Activated CD4-positive, alpha-beta T cell treated with anti-CD3 and anti-CD28 coated beads for 36 hours (primary cell): ENCODE measurements at regions of chr1 and their contacts with region 1.

Region 1: DNA sequence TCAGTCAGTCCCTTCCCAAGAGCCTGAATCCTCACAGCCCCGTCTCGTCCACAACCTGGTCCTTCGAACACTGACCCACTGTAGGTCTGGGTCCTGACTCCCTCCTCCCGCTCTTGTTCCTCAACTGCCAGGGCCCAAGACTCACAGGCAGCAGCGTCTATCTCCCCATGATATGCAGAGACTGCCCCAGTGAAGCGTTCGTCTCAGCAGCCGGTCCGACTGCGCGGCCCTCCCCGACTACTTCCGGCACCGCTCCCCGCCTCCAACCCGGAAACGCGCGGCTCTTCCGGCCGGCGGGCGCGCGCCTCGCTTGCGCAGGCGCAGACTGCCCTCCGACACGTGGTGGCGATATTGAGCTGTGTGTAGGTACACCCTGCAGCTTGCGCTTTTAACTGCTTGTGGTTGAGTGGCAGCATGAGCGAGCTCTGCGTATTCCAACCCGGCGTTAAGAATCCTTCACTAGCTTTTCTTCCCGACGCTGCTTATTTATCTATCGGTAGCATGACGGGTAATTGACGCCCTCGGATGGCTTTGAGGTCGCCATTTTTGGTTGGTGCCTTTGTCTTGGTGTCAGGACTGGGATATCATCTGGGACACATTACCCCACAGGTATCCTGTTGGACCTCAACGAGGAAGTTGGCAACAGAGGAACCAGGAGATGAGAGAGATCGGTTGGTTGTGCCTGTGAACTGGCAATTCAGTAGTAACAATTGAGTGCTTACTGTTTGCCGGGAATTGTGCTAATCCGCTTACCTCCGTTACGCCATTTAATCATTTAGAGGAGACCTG is at the start of gene TAF12:
- DNase-seq: peak; percentile 95
- ATAC-seq: peak; percentile 81
- H3K4me3 Mint-ChIP-seq: peak within 1 kb of the TSS; percentile 98
- H3K27ac Mint-ChIP-seq: peak within 1 kb of the TSS; percentile 97
- H3K4me1 Mint-ChIP-seq: peaks cover 50% of the 10 kb centered on the region
- H3K27me3 Mint-ChIP-seq: no peaks in the 10 kb centered on the region
- total RNA-seq, gene TAF12: 23.8 to 32.5 TPM

Region 2: DNA sequence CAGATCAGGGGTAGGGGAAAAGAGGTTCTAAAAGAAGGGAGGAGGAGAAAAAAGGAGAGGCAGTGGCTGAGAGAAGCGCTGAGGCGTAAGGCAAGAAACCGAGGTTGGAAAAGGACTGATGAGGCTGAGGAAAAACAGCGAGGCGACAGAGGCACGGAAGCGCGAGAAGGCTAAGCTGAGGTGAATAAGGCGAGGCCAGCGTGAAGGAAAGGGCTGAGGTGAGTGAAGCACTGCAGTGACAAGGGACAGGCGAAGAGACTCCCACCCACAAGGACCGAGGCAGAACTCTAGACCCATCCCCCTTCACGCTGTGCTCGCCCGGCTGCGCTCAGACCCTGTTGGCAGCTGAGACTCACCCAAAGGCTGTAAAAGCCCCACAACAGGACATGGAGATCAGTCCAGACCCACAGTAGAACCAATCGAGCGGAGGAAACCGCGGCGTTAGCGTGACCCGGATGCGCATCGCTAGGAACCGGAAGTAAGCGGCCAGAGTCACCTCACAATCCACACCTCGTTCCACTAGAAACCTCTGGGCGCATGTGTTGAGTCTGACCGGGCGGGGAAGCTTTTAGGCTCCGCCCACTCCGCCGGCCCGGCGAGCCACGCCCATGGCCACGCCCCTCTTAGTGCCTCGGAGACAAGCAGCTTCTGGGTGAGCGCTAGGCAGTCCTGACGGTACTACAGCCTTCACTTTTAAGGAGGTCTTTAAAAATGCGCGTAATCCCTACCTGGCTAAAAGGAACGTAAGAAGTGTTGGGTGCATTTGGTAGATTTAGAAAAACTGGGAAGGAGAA is 554.7 kb before region 1 on chr1 and contains the start of gene EYA3:
- CTCF ChIA-PET with region 1: no interaction called
- POLR2A ChIA-PET with region 1: no interaction called
- intact Hi-C with region 1: loop called in 1 of 2 experiments (anchors 10 kb)
- DNase-seq: peak; percentile 99
- ATAC-seq: peak; percentile 93
- H3K4me3 Mint-ChIP-seq: peak within 1 kb of the TSS; percentile 98
- H3K27ac Mint-ChIP-seq: peak within 1 kb of the TSS; percentile 98
- H3K4me1 Mint-ChIP-seq: peaks cover 27% of the 10 kb centered on the region
- H3K27me3 Mint-ChIP-seq: no peaks in the 10 kb centered on the region
- total RNA-seq, gene EYA3: 30.1 to 37.1 TPM

Region 3: DNA sequence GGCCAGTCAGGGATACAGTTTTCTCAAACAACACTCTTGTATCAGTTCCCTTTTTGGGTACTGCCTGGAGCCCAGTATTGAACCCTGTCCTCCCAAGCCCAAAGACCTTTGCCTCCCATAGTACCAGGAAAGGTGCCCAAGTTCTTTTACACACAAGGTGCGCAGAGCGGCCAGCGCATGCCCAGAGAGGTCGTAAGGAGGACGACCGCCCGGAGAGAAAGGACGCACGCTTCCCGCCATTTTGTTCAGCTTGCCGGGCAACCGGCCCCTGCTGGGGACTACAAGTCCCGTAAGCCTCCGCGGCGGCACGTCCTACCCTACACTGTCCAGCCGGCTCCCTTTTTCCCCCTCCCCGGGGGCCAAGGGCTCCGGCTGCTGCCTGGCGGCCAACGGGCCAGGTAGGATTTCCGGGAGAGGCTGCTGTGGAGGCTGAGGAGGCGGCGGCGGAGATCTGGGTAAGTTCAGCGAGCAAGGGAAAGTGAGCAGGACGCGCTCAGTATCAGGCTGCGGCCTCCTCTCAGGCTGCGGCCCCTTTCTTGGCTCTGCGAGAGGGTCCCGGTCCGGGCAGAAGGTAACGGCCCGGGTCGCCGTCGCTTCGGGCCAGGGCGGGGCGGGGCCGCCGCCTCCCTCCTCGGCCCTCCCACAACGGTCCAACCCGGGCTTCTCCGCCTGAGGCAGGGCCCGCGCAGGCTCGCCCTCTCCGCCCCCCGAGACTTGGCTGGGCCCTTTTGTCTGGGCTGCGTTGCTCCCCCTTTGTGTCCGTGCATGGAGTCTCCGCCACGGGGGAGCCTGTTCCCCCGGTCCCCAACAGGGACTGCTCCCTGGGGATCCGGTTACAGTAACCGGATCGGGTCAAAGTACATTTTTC is 273.4 kb before region 1 on chr1 and contains the start of gene PHACTR4:
- CTCF ChIA-PET with region 1: no interaction called
- POLR2A ChIA-PET with region 1: interaction called, 4 read pairs
- intact Hi-C with region 1: loop called in 1 of 2 experiments (anchors 2 kb)
- DNase-seq: peak; percentile 90
- ATAC-seq: peak; percentile 93
- H3K4me3 Mint-ChIP-seq: peak within 1 kb of the TSS; percentile 92
- H3K27ac Mint-ChIP-seq: peak within 1 kb of the TSS; percentile 92
- H3K4me1 Mint-ChIP-seq: peaks cover 25% of the 10 kb centered on the region
- H3K27me3 Mint-ChIP-seq: no peaks in the 10 kb centered on the region
- total RNA-seq, gene PHACTR4: 23.0 to 30.1 TPM

Region 4: DNA sequence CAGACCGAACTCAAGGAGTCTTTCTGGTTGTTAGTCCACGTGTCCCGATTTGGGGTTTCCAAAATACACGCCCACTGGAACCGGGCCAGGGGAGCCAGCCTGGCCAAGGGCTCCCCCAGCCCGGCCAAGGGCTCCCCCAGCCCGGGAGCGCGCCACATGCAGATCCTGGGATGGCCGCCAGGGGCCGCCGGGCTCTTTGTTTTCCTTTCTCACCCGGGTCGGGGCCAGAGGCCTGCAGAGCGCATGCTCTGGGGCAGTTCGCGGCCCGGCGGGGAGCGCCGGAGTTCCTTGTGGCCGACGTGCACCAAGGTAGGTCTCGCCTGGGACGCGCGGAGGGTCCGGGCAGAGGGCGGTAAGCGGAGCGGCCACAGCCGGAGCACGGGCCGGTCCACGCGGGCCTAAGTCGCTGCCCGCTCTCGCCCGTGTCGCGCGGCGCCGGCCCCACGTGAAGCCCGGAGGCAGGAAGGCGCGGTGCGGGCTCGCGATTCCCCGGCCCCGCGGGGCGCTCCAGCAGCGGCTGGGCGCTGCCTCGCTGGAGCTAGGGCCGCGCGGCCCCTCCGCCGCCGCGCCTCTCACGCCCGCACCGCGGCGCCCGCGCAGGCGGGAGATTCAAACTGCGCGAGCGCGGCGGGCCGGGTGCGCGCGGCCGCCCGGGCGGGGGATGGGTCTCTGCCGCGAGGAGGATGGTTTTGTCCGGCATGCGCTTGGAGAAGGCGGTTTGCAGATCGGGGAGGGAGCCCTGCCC is 124.9 kb before region 1 on chr1:
- CTCF ChIA-PET with region 1: no interaction called
- POLR2A ChIA-PET with region 1: interaction called, 22 read pairs
- intact Hi-C with region 1: loop called (anchors 1 to 2 kb)
- DNase-seq: peak; percentile 95
- ATAC-seq: peak; percentile 66
- H3K4me3 Mint-ChIP-seq: peak overlapping the region; percentile 77
- H3K27ac Mint-ChIP-seq: peak overlapping the region; percentile 83
- H3K4me1 Mint-ChIP-seq: peaks cover 34% of the 10 kb centered on the region
- H3K27me3 Mint-ChIP-seq: no peaks in the 10 kb centered on the region

Region 5: DNA sequence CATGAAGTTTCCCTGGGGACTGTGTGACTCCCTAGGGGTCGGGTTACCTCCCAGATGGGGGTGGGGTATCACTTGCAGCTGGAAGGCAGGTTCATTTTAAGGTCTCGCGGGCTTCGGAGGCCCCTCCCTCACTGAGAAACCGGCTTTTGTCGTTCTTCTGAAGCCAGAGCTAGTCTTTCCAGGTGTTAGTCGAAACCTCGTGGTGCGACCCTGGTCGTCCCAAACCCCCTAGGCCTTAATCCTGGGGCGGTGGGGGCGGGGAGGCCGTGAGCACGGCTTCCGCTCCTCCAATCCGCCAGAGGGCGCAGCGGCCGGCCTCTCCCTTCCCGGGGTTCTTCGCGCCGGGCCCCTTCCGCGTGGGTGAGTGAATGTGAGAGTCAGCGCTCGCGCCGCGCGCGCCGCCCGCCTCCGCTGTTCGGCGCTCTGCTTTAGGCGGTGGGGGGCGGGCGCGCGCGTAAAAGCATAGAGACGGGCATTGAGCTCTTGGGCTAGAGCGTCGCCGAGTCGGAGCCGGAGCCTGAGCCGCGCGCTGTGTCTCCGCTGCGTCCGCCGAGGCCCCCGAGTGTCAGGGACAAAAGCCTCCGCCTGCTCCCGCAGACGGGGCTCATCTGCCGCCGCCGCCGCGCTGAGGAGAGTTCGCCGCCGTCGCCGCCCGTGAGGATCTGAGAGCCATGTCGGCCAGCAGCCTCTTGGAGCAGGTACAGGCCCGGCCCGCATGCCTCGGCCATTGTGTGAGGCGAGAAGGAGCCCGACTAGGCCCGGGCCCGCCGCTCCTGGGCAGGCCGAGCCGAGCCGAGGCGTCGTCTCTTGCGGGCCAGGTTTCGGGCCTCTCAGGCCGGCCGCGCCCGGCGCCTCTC is 93.6 kb after region 1 on chr1 and contains the start of gene YTHDF2:
- CTCF ChIA-PET with region 1: interaction called, 24 read pairs
- POLR2A ChIA-PET with region 1: interaction called, 50 read pairs
- intact Hi-C with region 1: loop called (anchors 1 kb)
- DNase-seq: peak; percentile 99
- ATAC-seq: peak; percentile 90
- H3K4me3 Mint-ChIP-seq: peak within 1 kb of the TSS; percentile 95
- H3K27ac Mint-ChIP-seq: peak within 1 kb of the TSS; percentile 90
- H3K4me1 Mint-ChIP-seq: peaks cover 31% of the 10 kb centered on the region
- H3K27me3 Mint-ChIP-seq: no peaks in the 10 kb centered on the region
- total RNA-seq, gene YTHDF2: 74.8 to 98.7 TPM

Region 6: GRCh38 chr1:29192220-29192619 is 549.2 kb after region 1 on chr1:
- CTCF ChIA-PET with region 1: no interaction called
- POLR2A ChIA-PET with region 1: no interaction called
- intact Hi-C with region 1: no loop called
- DNase-seq: no peak
- ATAC-seq: no peak
- H3K4me3 Mint-ChIP-seq: no peak overlapping the region
- H3K27ac Mint-ChIP-seq: no peak overlapping the region
- H3K4me1 Mint-ChIP-seq: no peaks in the 10 kb centered on the region
- H3K27me3 Mint-ChIP-seq: no peaks in the 10 kb centered on the region